Endothelial cell of umbilical vein (primary cell): ENCODE measurements at regions of chr2 and their contacts with region 1.

Region 1: GRCh38 chr2:135913727-135914365 is 37.6 kb upstream of the MCM6 start:
- DNase-seq: peak; percentile 59
- H3K4me3 ChIP-seq: no peak overlapping the region
- H3K27ac ChIP-seq: no peak overlapping the region
- H3K4me1 ChIP-seq: peaks cover 10% of the 10 kb centered on the region
- H3K27me3 ChIP-seq: no peaks in the 10 kb centered on the region
- CTCF ChIP-seq: peak; percentile 45 to 52
- POLR2A ChIP-seq: no peak

Region 2: DNA sequence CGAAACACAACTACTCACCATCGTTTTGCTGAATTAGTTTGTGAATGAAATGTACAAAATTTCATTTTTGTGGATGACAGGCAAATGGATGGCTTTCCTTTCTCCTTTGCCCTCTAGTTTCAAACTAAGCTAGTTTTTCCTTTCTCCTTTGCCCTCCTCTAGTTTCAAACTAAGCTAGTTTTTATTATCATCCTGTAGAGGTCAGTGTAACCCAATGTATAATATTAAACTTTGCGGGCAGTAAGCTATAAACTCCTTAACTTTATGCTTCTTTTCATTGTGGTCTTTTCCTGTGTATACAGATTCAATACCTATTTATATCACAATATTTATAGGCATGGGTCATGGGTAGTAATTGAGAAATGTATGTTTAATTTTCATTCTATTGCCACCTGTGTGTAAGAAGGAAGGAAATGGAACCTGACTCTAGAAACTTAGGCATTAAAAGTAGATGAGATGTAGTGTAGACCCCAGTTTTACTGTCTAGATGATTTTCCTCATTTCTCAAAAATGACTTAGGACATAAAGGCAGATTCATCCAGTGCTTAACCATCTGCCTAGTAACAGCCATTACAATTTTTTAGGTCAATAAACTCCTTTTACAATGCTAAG is 924.7 kb before region 1 on chr2:
- CTCF ChIA-PET with region 1: interaction called, 12 read pairs
- POLR2A ChIA-PET with region 1: no interaction called
- dilution Hi-C with region 1: no loop called
- intact Hi-C with region 1: no loop called
- DNase-seq: peak; percentile 34
- H3K4me3 ChIP-seq: no peak overlapping the region
- H3K27ac ChIP-seq: no peak overlapping the region
- H3K4me1 ChIP-seq: no peaks in the 10 kb centered on the region
- H3K27me3 ChIP-seq: peaks cover 10 to 31% of the 10 kb centered on the region in 2 experiments
- CTCF ChIP-seq: peak; percentile 15 to 33
- POLR2A ChIP-seq: no peak

Region 3: GRCh38 chr2:135820003-135820618 is 93.7 kb before region 1 on chr2:
- CTCF ChIA-PET with region 1: no interaction called
- POLR2A ChIA-PET with region 1: no interaction called
- dilution Hi-C with region 1: no loop called
- intact Hi-C with region 1: no loop called
- DNase-seq: no peak
- H3K4me3 ChIP-seq: no peak overlapping the region
- H3K27ac ChIP-seq: no peak overlapping the region
- H3K4me1 ChIP-seq: no peaks in the 10 kb centered on the region
- H3K27me3 ChIP-seq: peaks cover 0 to 4% of the 10 kb centered on the region in 2 experiments
- CTCF ChIP-seq: no peak
- POLR2A ChIP-seq: no peak

Region 4: GRCh38 chr2:135925571-135925970 is 11.7 kb after region 1 on chr2:
- CTCF ChIA-PET with region 1: interaction called, 17 read pairs
- POLR2A ChIA-PET with region 1: no interaction called
- dilution Hi-C with region 1: no loop called
- intact Hi-C with region 1: no loop called
- DNase-seq: no peak
- H3K4me3 ChIP-seq: no peak overlapping the region
- H3K27ac ChIP-seq: no peak overlapping the region
- H3K4me1 ChIP-seq: no peaks in the 10 kb centered on the region
- H3K27me3 ChIP-seq: no peaks in the 10 kb centered on the region
- CTCF ChIP-seq: no peak
- POLR2A ChIP-seq: no peak

Region 5: GRCh38 chr2:136025057-136025973 is 111.5 kb after region 1 on chr2:
- CTCF ChIA-PET with region 1: interaction called, 4 read pairs
- POLR2A ChIA-PET with region 1: no interaction called
- dilution Hi-C with region 1: no loop called
- intact Hi-C with region 1: loop called (anchors 5 kb)
- DNase-seq: peak; percentile 43
- H3K4me3 ChIP-seq: no peak overlapping the region
- H3K27ac ChIP-seq: no peak overlapping the region
- H3K4me1 ChIP-seq: no peaks in the 10 kb centered on the region
- H3K27me3 ChIP-seq: peaks cover 5 to 6% of the 10 kb centered on the region in 2 experiments
- CTCF ChIP-seq: no peak
- POLR2A ChIP-seq: no peak

Region 6: GRCh38 chr2:136378712-136379595 is 465.1 kb after region 1 on chr2:
- CTCF ChIA-PET with region 1: interaction called, 127 read pairs
- POLR2A ChIA-PET with region 1: no interaction called
- dilution Hi-C with region 1: no loop called
- intact Hi-C with region 1: loop called (anchors 1 kb)
- DNase-seq: peak; percentile 64
- H3K4me3 ChIP-seq: no peak overlapping the region
- H3K27ac ChIP-seq: no peak overlapping the region
- H3K4me1 ChIP-seq: peaks cover 7% of the 10 kb centered on the region
- H3K27me3 ChIP-seq: no peaks in the 10 kb centered on the region
- CTCF ChIP-seq: peak; percentile 68 to 77
- POLR2A ChIP-seq: no peak

Region 7: DNA sequence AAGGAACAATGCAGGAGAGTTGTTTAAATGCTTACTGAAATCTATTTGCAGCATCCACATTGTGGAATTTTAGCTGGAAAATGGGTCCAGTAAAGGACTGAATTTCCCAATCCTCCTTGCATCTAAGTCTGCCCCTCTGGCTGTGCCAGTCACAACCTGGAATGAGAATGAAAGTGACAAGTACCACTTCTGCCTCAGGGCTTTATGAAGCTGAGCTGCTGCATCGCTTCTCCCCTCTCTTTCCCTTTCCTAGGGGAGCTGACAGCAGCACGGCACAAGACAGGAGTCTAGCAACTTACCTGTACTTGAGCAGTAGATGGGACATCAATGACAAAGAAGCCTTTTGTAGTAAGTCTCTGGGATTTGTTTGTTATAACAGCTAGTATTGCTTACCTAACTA is 824.2 kb after region 1 on chr2:
- CTCF ChIA-PET with region 1: no interaction called
- POLR2A ChIA-PET with region 1: no interaction called
- dilution Hi-C with region 1: no loop called
- intact Hi-C with region 1: loop called (anchors 5 kb)
- DNase-seq: no peak
- H3K4me3 ChIP-seq: no peak overlapping the region
- H3K27ac ChIP-seq: no peak overlapping the region
- H3K4me1 ChIP-seq: no peaks in the 10 kb centered on the region
- H3K27me3 ChIP-seq: no peaks in the 10 kb centered on the region
- CTCF ChIP-seq: no peak
- POLR2A ChIP-seq: no peak